ENCODE measurements at regions of chr1 and their contacts with region 1.

Region 1: GRCh38 chr1:1374929-1375662 is at the start of gene AURKAIP1:
- DNase-seq: peak; percentile 100
- ATAC-seq: peak; percentile 89
- H3K4me3 ChIP-seq: peak within 1 kb of the TSS; percentile 61 to 93 (median 78)
- H3K4me3 Mint-ChIP-seq: peak within 1 kb of the TSS; percentile 84
- H3K27ac ChIP-seq: peak within 1 kb of the TSS; percentile 75 to 95
- H3K27ac Mint-ChIP-seq: peak within 1 kb of the TSS; percentile 89
- H3K4me1 ChIP-seq: peaks cover 19 to 37% of the 10 kb centered on the region in 2 donors
- H3K4me1 Mint-ChIP-seq: peaks cover 11% of the 10 kb centered on the region
- H3K27me3 ChIP-seq: no peaks in the 10 kb centered on the region
- H3K27me3 Mint-ChIP-seq: no peaks in the 10 kb centered on the region
- CTCF ChIP-seq: peak; percentile 39
- total RNA-seq, gene AURKAIP1: 61.7 and 67.0 TPM in 2 replicates

Region 2: DNA sequence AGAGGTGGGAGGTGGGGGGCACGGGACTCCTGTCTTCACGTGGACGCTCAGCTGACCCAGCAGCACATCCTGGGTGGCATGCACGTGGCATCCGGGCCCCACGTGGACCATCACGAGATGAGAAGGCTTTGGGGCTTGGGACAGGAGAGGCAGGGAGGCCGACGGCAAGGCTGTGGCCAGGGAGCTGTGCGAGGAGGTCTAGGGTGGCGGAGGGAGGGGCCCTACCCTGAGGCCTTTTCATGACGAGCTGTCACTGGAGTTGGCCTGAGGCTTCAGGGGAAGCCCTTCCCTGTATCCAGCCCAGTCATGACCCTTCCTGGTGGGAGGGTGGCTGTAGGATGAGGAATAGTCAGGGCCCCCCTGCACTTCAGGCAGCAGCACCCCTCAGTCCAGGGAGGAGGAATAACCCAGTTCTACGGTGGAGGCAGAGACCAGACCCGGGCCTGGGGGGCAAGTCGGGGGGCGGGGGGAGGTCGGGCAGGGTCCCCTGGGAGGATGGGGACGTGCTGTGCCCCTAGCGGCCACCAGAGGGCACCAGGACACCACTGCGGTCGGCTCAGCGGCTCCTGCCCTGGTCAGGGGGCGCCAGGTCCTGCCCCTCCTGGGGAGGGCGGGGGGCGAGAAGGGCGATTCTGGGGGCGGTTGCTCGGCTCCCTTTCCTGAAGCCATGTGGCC is 391.2 kb before region 1 on chr1:
- CTCF ChIA-PET with region 1: interaction called, 15 read pairs
- POLR2A ChIA-PET with region 1: no interaction called
- intact Hi-C with region 1: no loop called
- DNase-seq: peak; percentile 73
- ATAC-seq: peak; percentile 95
- H3K4me3 ChIP-seq: no peak overlapping the region
- H3K4me3 Mint-ChIP-seq: no peak overlapping the region
- H3K27ac ChIP-seq: no peak overlapping the region
- H3K27ac Mint-ChIP-seq: no peak overlapping the region
- H3K4me1 ChIP-seq: peaks cover 0 to 3% of the 10 kb centered on the region in 2 donors
- H3K4me1 Mint-ChIP-seq: no peaks in the 10 kb centered on the region
- H3K27me3 ChIP-seq: peaks cover 0 to 22% (median 0%) of the 10 kb centered on the region in 4 experiments
- H3K27me3 Mint-ChIP-seq: peaks cover 38% of the 10 kb centered on the region
- CTCF ChIP-seq: peak; percentile 90

Region 3: GRCh38 chr1:1273512-1274298 is 101.4 kb before region 1 on chr1 and contains the start of gene UBE2J2:
- CTCF ChIA-PET with region 1: interaction called, 4 read pairs
- POLR2A ChIA-PET with region 1: interaction called, 8 read pairs
- intact Hi-C with region 1: loop called (anchors 1 kb)
- DNase-seq: peak; percentile 94
- ATAC-seq: peak; percentile 98
- H3K4me3 ChIP-seq: peak within 1 kb of the TSS; percentile 3 to 84 (median 77)
- H3K4me3 Mint-ChIP-seq: peak within 1 kb of the TSS; percentile 88
- H3K27ac ChIP-seq: peak within 1 kb of the TSS; percentile 24 to 77
- H3K27ac Mint-ChIP-seq: peak within 1 kb of the TSS; percentile 76
- H3K4me1 ChIP-seq: peaks cover 29 to 38% of the 10 kb centered on the region in 2 donors
- H3K4me1 Mint-ChIP-seq: peaks cover 36% of the 10 kb centered on the region
- H3K27me3 ChIP-seq: no peaks in the 10 kb centered on the region
- H3K27me3 Mint-ChIP-seq: no peaks in the 10 kb centered on the region
- CTCF ChIP-seq: no peak
- total RNA-seq, gene UBE2J2: 115 and 120 TPM in 2 replicates

Region 4: GRCh38 chr1:1307908-1308755 is 67.0 kb before region 1 on chr1 and contains the starts of genes ACAP3 and PUSL1:
- CTCF ChIA-PET with region 1: interaction called, 16 read pairs
- POLR2A ChIA-PET with region 1: no interaction called
- intact Hi-C with region 1: no loop called
- DNase-seq: peak; percentile 95
- ATAC-seq: peak; percentile 62
- H3K4me3 ChIP-seq: peak within 1 kb of the TSS; percentile 31 to 92 (median 82)
- H3K4me3 Mint-ChIP-seq: peak within 1 kb of the TSS; percentile 90
- H3K27ac ChIP-seq: peak within 1 kb of the TSS; percentile 84 to 89
- H3K27ac Mint-ChIP-seq: peak within 1 kb of the TSS; percentile 95
- H3K4me1 ChIP-seq: peaks cover 34 to 47% of the 10 kb centered on the region in 2 donors
- H3K4me1 Mint-ChIP-seq: peaks cover 33% of the 10 kb centered on the region
- H3K27me3 ChIP-seq: no peaks in the 10 kb centered on the region
- H3K27me3 Mint-ChIP-seq: no peaks in the 10 kb centered on the region
- CTCF ChIP-seq: no peak
- total RNA-seq, gene ACAP3: 40.7 and 49.1 TPM in 2 replicates
- total RNA-seq, gene PUSL1: 15.7 and 17.9 TPM in 2 replicates

Region 5: GRCh38 chr1:1349256-1350012 is 25.7 kb before region 1 on chr1 and contains the start of gene DVL1:
- CTCF ChIA-PET with region 1: interaction called, 8 read pairs
- POLR2A ChIA-PET with region 1: no interaction called
- intact Hi-C with region 1: loop called (anchors 1 kb)
- DNase-seq: peak; percentile 88
- ATAC-seq: peak; percentile 81
- H3K4me3 ChIP-seq: peak within 1 kb of the TSS; percentile 34 to 81 (median 64)
- H3K4me3 Mint-ChIP-seq: peak within 1 kb of the TSS; percentile 83
- H3K27ac ChIP-seq: peak within 1 kb of the TSS in 1 of 2 donors; percentile 73
- H3K27ac Mint-ChIP-seq: peak within 1 kb of the TSS; percentile 56
- H3K4me1 ChIP-seq: peaks cover 30 to 44% of the 10 kb centered on the region in 2 donors
- H3K4me1 Mint-ChIP-seq: peaks cover 31% of the 10 kb centered on the region
- H3K27me3 ChIP-seq: peaks cover 0 to 31% (median 10%) of the 10 kb centered on the region in 4 experiments
- H3K27me3 Mint-ChIP-seq: peaks cover 12% of the 10 kb centered on the region
- CTCF ChIP-seq: peak; percentile 46
- total RNA-seq, gene DVL1: 46.1 and 48.2 TPM in 2 replicates

Region 6: GRCh38 chr1:1399187-1399871 is 24.2 kb after region 1 on chr1 and contains the start of gene CCNL2:
- CTCF ChIA-PET with region 1: interaction called, 12 read pairs
- POLR2A ChIA-PET with region 1: interaction called, 23 read pairs
- intact Hi-C with region 1: loop called (anchors 1 kb)
- DNase-seq: peak; percentile 99
- ATAC-seq: peak; percentile 96
- H3K4me3 ChIP-seq: peak within 1 kb of the TSS; percentile 79 to 96 (median 92)
- H3K4me3 Mint-ChIP-seq: peak within 1 kb of the TSS; percentile 94
- H3K27ac ChIP-seq: peak within 1 kb of the TSS; percentile 70 to 85
- H3K27ac Mint-ChIP-seq: peak within 1 kb of the TSS; percentile 91
- H3K4me1 ChIP-seq: peaks cover 23 to 29% of the 10 kb centered on the region in 2 donors
- H3K4me1 Mint-ChIP-seq: peaks cover 49% of the 10 kb centered on the region
- H3K27me3 ChIP-seq: no peaks in the 10 kb centered on the region
- H3K27me3 Mint-ChIP-seq: no peaks in the 10 kb centered on the region
- CTCF ChIP-seq: peak; percentile 67
- total RNA-seq, gene CCNL2: 347 and 367 TPM in 2 replicates

Region 7: GRCh38 chr1:1406817-1407635 is 31.9 kb after region 1 on chr1 and contains the start of gene MRPL20:
- CTCF ChIA-PET with region 1: interaction called, 3 read pairs
- POLR2A ChIA-PET with region 1: interaction called, 5 read pairs
- intact Hi-C with region 1: loop called (anchors 1 kb)
- DNase-seq: peak; percentile 96
- ATAC-seq: peak; percentile 95
- H3K4me3 ChIP-seq: peak within 1 kb of the TSS; percentile 70 to 98 (median 90)
- H3K4me3 Mint-ChIP-seq: peak within 1 kb of the TSS; percentile 90
- H3K27ac ChIP-seq: peak within 1 kb of the TSS; percentile 69 to 87
- H3K27ac Mint-ChIP-seq: peak within 1 kb of the TSS; percentile 91
- H3K4me1 ChIP-seq: peaks cover 21 to 26% of the 10 kb centered on the region in 2 donors
- H3K4me1 Mint-ChIP-seq: peaks cover 37% of the 10 kb centered on the region
- H3K27me3 ChIP-seq: no peaks in the 10 kb centered on the region
- H3K27me3 Mint-ChIP-seq: no peaks in the 10 kb centered on the region
- CTCF ChIP-seq: peak; percentile 15
- total RNA-seq, gene MRPL20: 119 and 129 TPM in 2 replicates